ENCODE measurements at regions of chr11 and their contacts with region 1.

Region 1: GRCh38 chr11:84316866-84317555 is 1030.8 kb upstream of the CCDC90B start:
- DNase-seq: peak in 2 of 6 donors; percentile 9 to 31
- ATAC-seq: peak in 3 of 4 donors; percentile 57 to 87 (median 75)
- H3K4me3 ChIP-seq: no peak overlapping the region
- H3K27ac ChIP-seq: no peak overlapping the region
- H3K4me1 ChIP-seq: no peaks in the 10 kb centered on the region
- H3K27me3 ChIP-seq: no peaks in the 10 kb centered on the region
- CTCF ChIP-seq: no peak

Region 2: GRCh38 chr11:83852775-83853442 is 464.1 kb before region 1 on chr11:
- intact Hi-C with region 1: loop called in 1 of 3 experiments (anchors 10 kb)
- DNase-seq: no peak
- ATAC-seq: peak; percentile 85 to 95 (median 90)
- H3K4me3 ChIP-seq: no peak overlapping the region
- H3K27ac ChIP-seq: peak overlapping the region in 2 of 4 donors; percentile 9 to 29
- H3K4me1 ChIP-seq: peaks cover 7 to 16% (median 13%) of the 10 kb centered on the region in 3 donors
- H3K27me3 ChIP-seq: no peaks in the 10 kb centered on the region
- CTCF ChIP-seq: no peak